ENCODE measurements at regions of chr16 and their contacts with region 1.

Region 1: GRCh38 chr16:12228602-12229499 is 252.3 kb downstream of the SNX29 start:
- H3K4me3 ChIP-seq: no peak overlapping the region
- H3K27ac ChIP-seq: no peak overlapping the region
- H3K4me1 ChIP-seq: peaks cover 5% of the 10 kb centered on the region; the same call in 1 of the 2 replicates
- CTCF ChIP-seq: peak; percentile 56; the same call in 1 of the 2 replicates

Region 2: GRCh38 chr16:11964761-11965551 is 263.9 kb before region 1 on chr16 and contains the start of gene TNFRSF17:
- CTCF ChIA-PET with region 1: no interaction called
- POLR2A ChIA-PET with region 1: no interaction called
- H3K4me3 ChIP-seq: no peak within 1 kb of the TSS
- H3K27ac ChIP-seq: no peak within 1 kb of the TSS
- H3K4me1 ChIP-seq: no peaks in the 10 kb centered on the region
- CTCF ChIP-seq: no peak

Region 3: GRCh38 chr16:12240036-12240435 is 11.2 kb after region 1 on chr16:
- CTCF ChIA-PET with region 1: interaction called, 10 read pairs
- POLR2A ChIA-PET with region 1: no interaction called
- H3K4me3 ChIP-seq: no peak overlapping the region
- H3K27ac ChIP-seq: no peak overlapping the region
- H3K4me1 ChIP-seq: no peaks in the 10 kb centered on the region
- CTCF ChIP-seq: no peak

Region 4: DNA sequence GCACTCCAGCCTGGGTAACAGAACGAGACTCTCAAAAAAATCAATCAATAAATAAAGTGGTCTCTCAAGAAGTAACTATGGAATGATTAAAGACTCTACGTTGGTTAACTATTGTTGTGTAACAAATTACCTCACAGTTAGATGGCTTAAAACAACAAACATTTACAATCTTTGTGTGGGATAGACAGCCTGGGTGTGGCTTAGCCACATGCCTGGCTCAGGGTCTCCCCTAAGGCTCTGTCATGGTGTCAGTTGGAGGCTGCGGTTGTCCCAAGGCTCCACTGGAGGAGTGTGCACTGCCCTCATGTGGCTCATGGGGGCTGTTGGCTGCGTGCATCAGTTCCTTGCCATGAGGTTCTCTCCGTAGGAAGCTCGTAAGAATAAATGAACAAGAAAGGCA is 42.2 kb after region 1 on chr16:
- CTCF ChIA-PET with region 1: interaction called, 17 read pairs
- POLR2A ChIA-PET with region 1: no interaction called
- H3K4me3 ChIP-seq: no peak overlapping the region
- H3K27ac ChIP-seq: no peak overlapping the region
- H3K4me1 ChIP-seq: no peaks in the 10 kb centered on the region
- CTCF ChIP-seq: peak; percentile 54; the same call in 1 of the 2 replicates

Region 5: GRCh38 chr16:12295395-12295794 is 66.5 kb after region 1 on chr16:
- CTCF ChIA-PET with region 1: no interaction called
- POLR2A ChIA-PET with region 1: no interaction called
- H3K4me3 ChIP-seq: no peak overlapping the region
- H3K27ac ChIP-seq: no peak overlapping the region
- H3K4me1 ChIP-seq: no peaks in the 10 kb centered on the region
- CTCF ChIP-seq: no peak